ENCODE measurements at regions of chr12 and their contacts with region 1.

Region 1: DNA sequence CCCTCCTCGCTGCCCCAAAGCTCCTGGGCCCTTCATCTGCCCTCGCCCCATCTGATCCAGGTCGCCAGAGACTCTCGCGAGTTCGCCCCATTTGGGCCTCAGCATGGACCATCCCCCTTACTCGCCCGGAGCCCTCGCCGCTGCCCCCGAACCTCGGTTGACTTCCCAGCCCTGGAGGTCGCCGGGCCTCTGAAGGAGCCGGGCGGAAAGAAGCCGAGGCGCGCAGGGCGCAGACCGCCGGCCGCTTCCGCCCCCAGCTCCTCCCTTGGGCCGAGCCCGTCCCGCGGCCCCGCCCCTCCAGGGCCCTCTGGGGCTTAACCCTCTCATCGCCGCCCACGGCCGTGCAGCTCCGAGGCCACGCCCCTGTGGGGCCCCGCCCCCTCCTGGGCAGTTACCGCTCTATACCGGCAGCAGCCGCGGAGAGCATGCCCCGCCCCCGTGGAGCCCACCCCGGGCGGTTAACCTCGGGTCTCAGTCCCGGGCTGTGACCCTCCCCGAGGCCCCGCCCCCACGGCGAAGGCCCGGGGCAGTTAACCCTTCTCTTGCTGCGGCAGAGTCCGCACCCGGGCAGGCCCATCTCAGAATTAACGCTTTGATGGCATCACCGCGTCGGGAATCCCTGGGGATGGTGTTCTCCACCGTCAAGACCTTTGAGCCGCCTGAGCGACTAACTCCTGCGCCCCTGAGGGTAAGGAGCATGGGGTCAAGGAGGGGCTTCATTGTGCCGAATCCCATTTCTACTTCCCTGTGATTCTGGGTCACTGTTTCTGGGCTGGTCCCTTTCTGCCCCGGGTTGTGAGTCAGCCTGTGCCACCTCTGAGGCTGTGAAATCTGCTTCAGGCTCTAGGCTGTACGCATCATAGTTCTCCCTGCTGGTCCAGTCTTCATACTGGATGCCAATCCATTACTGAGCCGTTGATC is at the start of gene SPSB2:
- DNase-seq: peak; percentile 99
- H3K4me3 Mint-ChIP-seq: peak within 1 kb of the TSS; percentile 93
- H3K27ac Mint-ChIP-seq: peak within 1 kb of the TSS; percentile 90
- H3K4me1 Mint-ChIP-seq: peaks cover 61% of the 10 kb centered on the region
- H3K27me3 Mint-ChIP-seq: no peaks in the 10 kb centered on the region
- total RNA-seq, gene SPSB2: 11.1 to 11.2 TPM

Region 2: DNA sequence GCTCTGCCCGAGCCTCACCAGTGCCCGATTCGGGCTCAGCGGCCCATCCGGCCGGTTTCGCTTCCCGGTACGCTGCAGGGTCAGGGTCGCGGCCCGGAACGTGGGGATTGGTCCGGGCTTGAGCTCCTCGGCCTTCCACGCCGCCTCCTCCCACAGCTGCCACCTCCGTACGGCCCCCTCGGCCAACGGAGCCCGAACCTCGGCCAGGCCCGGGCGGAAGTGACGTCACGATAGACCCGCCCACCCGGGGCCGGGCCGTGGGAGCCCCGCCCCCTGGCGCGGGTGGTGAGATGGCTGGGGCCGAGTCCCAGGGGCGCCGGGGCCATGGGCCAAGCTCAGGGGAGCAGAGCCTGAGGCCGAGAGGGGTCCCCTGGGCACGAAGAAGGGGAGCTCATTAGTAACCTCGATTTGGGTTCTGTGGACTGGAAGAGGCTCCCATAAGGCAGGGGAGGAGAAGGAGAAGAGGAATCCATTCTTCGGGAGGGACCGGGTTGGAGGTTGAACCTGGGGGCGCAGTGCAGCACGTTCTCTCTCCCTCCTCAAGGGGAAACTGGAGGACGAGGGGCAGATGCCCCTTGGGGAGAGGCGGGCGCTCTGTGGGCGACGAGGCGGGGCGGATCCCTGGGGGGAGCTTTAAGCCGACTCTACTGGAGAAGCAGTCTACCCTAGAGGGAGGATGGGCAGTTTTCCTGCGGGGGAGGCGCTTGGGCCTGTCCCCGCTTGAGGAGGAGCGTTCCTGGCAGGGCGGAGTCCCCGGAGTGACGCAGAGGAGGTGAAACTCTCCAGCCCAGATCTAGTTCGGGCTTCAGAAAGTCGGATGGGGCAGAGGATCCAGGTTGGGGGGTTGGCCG is 120.2 kb before region 1 on chr12 and contains the start of gene MLF2:
- CTCF ChIA-PET with region 1: interaction called, 14 read pairs
- POLR2A ChIA-PET with region 1: interaction called, 21 read pairs
- DNase-seq: peak; percentile 98
- H3K4me3 Mint-ChIP-seq: peak within 1 kb of the TSS; percentile 92
- H3K27ac Mint-ChIP-seq: peak within 1 kb of the TSS; percentile 90
- H3K4me1 Mint-ChIP-seq: peaks cover 25% of the 10 kb centered on the region
- H3K27me3 Mint-ChIP-seq: peaks cover 4% of the 10 kb centered on the region
- total RNA-seq, gene MLF2: 101 to 108 TPM

Region 3: GRCh38 chr12:6884539-6884938 is 11.2 kb after region 1 on chr12:
- CTCF ChIA-PET with region 1: interaction called, 17 read pairs
- POLR2A ChIA-PET with region 1: interaction called, 14 read pairs
- DNase-seq: no peak
- H3K4me3 Mint-ChIP-seq: no peak overlapping the region
- H3K27ac Mint-ChIP-seq: no peak overlapping the region
- H3K4me1 Mint-ChIP-seq: peaks cover 9% of the 10 kb centered on the region
- H3K27me3 Mint-ChIP-seq: no peaks in the 10 kb centered on the region

Region 4: GRCh38 chr12:6904280-6905278 is 31.2 kb after region 1 on chr12 and contains the start of gene LRRC23:
- CTCF ChIA-PET with region 1: interaction called, 17 read pairs
- POLR2A ChIA-PET with region 1: interaction called, 40 read pairs
- DNase-seq: peak; percentile 99
- H3K4me3 Mint-ChIP-seq: no peak within 1 kb of the TSS
- H3K27ac Mint-ChIP-seq: no peak within 1 kb of the TSS
- H3K4me1 Mint-ChIP-seq: peaks cover 2% of the 10 kb centered on the region
- H3K27me3 Mint-ChIP-seq: no peaks in the 10 kb centered on the region
- total RNA-seq, gene LRRC23: 5.7 to 6.1 TPM

Region 5: GRCh38 chr12:6927379-6928024 is 54.1 kb after region 1 on chr12 and contains the start of gene ATN1:
- CTCF ChIA-PET with region 1: interaction called, 10 read pairs
- POLR2A ChIA-PET with region 1: interaction called, 10 read pairs
- DNase-seq: peak; percentile 48
- H3K4me3 Mint-ChIP-seq: peak within 1 kb of the TSS; percentile 90
- H3K27ac Mint-ChIP-seq: peak within 1 kb of the TSS; percentile 78
- H3K4me1 Mint-ChIP-seq: peaks cover 68% of the 10 kb centered on the region
- H3K27me3 Mint-ChIP-seq: no peaks in the 10 kb centered on the region
- total RNA-seq, gene ATN1: 33.9 to 34.6 TPM

Region 6: DNA sequence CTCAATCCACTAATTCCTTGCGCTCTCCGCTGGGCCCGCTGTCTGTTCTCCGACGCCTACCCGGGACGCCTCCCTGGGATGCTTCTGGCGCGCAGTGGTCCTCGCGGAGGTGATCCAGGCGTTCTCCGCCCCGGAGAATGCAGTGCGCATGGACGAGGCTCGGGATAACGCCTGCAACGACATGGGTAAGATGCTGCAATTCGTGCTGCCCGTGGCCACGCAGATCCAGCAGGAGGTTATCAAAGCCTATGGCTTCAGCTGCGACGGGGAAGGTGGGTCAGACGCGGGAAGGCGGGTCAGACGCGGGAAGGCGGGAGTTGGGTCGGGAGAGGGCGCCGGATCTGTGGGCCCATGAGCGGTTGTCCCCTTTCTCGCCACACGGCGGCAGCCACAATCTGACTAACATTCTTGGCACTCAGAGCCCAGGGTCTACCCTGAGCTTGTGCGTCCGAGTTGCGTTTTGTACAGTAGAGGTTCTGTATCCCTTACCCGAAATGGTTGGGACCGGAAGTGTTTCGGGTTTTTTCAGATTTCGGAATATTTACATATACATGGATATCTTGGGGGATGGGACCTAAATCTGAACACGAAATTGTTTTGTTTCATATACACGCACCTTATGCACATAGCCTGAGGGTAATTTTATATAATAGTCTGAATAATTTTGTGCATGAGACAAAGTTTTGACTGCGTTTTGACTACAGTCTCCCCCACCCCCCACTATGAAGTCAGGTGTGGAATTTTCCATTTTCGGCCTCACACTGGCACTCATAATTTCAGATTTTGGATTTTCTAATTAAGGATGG is 71.2 kb after region 1 on chr12:
- CTCF ChIA-PET with region 1: interaction called, 28 read pairs
- POLR2A ChIA-PET with region 1: interaction called, 72 read pairs
- DNase-seq: peak; percentile 91
- H3K4me3 Mint-ChIP-seq: peak overlapping the region; percentile 86
- H3K27ac Mint-ChIP-seq: peak overlapping the region; percentile 93
- H3K4me1 Mint-ChIP-seq: peaks cover 59% of the 10 kb centered on the region
- H3K27me3 Mint-ChIP-seq: no peaks in the 10 kb centered on the region

Region 7: DNA sequence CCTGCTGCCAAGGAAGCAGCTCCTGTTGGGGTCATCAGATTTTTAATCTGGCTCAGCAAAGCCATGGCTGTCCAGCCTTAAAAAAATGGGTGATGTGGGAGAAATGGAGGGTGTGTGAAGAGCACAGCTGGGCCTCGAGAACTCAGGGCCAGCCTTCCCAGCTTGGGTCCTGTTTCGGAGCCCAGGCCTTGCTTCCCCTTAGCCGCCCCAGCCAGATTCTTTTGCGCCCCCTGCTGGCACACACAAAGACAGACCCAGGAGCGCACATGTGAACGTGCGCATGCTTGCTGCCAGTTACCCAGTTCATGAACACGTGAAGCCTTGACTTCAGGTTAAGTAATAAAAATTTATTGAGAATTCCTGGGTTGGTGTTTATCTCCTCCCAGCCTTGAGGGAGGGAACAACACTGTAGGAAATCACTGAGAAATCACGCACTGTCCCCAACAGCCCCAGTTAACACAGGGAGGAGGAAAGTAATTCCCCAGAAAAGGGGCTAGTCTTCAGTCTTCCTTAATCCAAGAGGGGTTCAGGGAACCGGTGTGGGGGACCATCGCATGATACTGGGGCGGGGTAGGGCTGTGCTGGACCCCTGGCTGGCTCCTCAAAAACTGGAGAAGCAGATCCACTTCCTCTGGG is 91.8 kb after region 1 on chr12:
- CTCF ChIA-PET with region 1: interaction called, 12 read pairs
- POLR2A ChIA-PET with region 1: interaction called, 43 read pairs
- DNase-seq: peak; percentile 89
- H3K4me3 Mint-ChIP-seq: no peak overlapping the region
- H3K27ac Mint-ChIP-seq: peak overlapping the region; percentile 83
- H3K4me1 Mint-ChIP-seq: peaks cover 79% of the 10 kb centered on the region
- H3K27me3 Mint-ChIP-seq: no peaks in the 10 kb centered on the region

Region 8: DNA sequence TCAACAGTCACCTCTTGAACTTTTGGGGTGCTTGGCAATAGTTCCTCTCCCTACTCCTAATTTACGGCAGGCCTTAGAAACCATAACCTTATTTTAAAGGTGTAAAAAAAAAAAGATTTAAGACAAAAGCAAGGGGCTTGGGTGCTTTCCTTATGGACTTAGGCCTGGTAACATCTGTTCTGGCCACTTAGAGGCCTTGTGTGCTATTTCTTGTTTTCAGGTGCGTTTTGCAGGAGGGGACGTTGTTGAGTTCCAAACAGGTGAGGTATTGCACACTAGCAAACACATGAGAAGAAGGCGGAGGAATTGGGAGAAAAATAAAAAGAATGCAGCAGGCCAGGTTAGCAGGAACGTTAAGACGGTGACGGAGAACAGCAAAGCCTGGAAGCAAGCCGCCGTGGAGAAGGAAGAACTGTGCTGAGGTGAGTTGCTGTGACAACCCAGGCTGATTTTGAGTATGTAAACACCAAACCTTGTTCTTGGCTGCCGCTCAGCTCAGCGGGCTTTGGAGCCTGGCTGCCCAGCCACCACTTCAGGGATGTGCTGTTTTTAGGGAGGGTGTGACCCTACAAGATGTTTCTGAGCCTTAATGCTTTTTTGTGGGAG is 114.7 kb after region 1 on chr12:
- CTCF ChIA-PET with region 1: no interaction called
- POLR2A ChIA-PET with region 1: no interaction called
- DNase-seq: no peak
- H3K4me3 Mint-ChIP-seq: no peak overlapping the region
- H3K27ac Mint-ChIP-seq: no peak overlapping the region
- H3K4me1 Mint-ChIP-seq: no peaks in the 10 kb centered on the region
- H3K27me3 Mint-ChIP-seq: no peaks in the 10 kb centered on the region